ENCODE measurements at regions of chr9 and their contacts with region 1.

Region 1: DNA sequence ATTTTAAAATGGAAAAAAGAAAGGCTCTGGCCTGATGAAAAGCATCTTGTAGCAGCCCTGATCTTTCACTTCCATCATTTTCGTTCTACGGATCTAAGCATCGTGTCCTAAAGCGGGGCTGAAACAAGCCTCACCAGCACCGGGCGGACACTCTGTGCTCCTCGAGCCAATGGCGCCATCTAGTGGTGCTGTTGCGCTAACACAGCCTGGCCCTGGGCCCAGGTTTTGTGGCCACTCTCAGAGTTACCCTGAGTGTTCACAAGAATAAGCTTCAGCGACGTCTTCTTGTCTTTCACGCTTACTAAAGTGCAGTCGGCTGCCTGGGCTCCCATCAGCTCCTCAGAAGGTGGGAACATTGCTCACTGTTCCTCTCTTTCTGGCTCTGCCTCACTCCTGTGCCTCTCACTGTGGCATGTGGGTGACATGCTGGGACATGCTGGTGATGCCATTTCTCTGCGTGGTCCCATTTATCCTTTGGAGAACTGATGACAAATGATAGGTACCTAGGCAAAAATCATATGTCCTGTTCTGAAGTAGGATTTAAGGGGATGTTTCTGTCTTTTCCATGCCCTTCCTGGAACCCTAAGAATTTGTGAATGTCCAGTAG is 32.7 kb downstream of the DMRT3 start:
- H3K4me3 ChIP-seq: no peak overlapping the region
- H3K27ac ChIP-seq: no peak overlapping the region
- H3K4me1 ChIP-seq: no peaks in the 10 kb centered on the region
- CTCF ChIP-seq: peak; percentile 82

Region 2: DNA sequence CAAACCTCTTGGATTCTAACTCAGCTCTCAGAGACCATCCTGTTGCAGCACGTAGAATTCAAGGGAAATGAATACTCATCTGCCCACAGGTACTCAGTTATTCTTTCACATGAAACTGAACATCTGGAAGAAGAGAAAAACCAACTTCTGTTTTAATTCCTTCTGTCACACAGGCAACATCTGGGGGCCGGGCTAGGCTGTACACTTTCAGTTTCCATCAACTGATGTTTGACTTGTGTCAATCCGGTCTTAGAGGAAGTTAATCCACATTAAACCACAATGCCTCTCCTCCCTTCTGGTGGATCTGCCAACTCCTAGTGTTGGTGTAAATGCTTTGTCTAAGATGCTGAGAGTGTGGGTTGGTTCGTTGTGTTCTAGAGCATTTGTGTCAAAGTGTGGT is 15.2 kb before region 1 on chr9:
- CTCF ChIA-PET with region 1: interaction called, 10 read pairs
- POLR2A ChIA-PET with region 1: no interaction called
- H3K4me3 ChIP-seq: no peak overlapping the region
- H3K27ac ChIP-seq: no peak overlapping the region
- H3K4me1 ChIP-seq: 0 out of 2 replicates have a peak, but pooled peaks cover under 1% of the 10 kb centered on the region
- CTCF ChIP-seq: no peak

Region 3: DNA sequence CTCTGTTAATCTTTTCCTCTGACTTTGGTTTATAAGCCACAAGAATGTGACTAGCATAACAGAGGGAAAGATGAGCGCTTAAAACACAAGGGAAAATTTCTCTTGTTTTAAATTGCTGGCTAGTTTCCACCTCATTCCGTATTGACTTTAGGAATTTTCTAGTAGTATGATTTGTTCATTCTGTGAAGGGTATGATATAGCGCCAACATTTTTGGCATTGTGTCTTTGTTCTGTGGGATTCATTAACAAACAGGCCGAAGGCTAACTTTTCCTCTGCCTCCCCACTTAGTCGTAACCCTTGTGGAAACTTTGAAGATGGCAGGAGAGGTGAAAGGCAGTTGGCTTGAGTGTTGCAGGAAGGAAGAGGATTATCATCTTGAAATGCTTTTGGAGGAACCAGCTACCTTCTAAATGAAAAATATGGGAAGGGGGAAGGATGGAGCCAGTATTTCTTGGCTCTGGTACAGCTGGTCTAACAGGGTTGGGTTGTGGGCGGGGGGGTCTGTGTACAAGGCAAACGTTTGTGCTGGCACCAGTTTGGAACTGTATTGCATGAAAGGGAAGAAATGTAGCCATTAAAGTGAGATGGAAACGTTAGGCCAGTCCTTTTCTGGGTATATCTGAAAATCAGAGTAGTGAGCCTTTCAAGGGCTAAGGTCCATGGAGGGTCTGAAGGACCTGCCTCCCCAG is 19.4 kb after region 1 on chr9:
- CTCF ChIA-PET with region 1: interaction called, 14 read pairs
- POLR2A ChIA-PET with region 1: no interaction called
- H3K4me3 ChIP-seq: no peak overlapping the region
- H3K27ac ChIP-seq: no peak overlapping the region
- H3K4me1 ChIP-seq: no peaks in the 10 kb centered on the region
- CTCF ChIP-seq: no peak

Region 4: DNA sequence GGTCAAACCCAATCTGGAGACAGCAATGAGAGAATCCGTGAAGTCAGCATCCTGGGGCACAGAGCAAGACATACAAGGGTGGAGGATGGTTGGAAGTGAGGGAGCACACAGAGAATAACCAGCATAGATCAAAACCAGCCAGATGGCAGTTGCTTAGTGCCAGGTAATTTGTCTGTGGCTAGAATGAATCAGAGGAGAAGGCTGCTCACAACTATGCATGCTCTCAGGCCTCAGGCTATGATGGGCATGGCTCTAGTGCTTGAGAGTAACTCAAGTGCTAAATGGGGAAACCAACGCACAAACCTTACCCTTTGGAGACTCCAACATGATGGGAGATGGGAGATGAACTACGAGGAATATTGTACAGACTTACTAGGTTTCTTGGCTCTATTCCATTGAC is 201.8 kb after region 1 on chr9:
- CTCF ChIA-PET with region 1: no interaction called
- POLR2A ChIA-PET with region 1: no interaction called
- H3K4me3 ChIP-seq: no peak overlapping the region
- H3K27ac ChIP-seq: no peak overlapping the region
- H3K4me1 ChIP-seq: no peaks in the 10 kb centered on the region
- CTCF ChIP-seq: no peak

Measured in HEK293 (cell line).